ENCODE measurements at regions of chr11 and their contacts with region 1.

Region 1: DNA sequence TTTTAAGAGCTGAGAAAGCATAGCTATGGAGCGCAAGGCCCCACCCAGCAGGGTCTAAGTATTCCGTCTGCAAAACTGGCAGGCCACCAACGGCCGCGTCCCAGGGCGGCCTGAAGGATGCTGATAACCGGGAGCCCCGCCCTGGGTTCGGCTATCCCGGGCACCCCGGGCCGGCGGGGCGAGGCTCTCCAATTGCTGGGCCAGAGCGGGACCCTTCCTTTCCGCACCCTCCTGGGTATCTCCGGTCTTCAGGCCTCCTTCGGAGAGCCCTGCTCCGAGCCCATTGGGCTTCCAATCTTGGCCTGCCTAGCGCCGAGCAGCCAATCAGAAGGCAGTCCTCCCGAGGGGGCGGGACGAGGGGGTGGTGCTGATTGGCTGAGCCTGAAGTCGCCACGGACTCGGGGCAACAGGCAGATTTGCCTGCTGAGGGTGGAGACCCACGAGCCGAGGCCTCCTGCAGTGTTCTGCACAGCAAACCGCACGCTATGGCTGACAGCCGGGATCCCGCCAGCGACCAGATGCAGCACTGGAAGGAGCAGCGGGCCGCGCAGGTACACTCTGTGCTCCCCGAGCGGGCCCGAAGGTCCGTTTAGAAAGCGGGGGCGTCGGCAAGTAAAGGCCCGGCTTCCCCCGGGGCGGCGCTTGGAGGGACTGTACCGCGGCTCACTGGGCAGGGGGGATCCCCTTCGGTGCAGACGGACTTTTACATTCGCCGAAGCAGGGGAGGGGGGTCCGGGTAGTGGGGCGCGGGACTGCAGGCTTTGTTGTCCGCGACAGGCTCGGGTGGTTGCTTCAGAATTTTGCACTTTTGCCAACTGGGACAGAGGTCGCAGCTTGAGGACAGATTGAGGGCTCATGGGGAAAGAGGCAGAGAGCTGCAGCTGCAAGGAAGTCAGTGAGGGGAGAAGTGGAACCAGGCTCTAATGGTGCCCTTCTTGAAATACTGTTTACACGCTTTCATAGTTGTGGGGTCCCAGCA is at the start of gene CAT:
- DNase-seq: peak; percentile 97
- H3K4me3 Mint-ChIP-seq: peak within 1 kb of the TSS; percentile 97
- H3K27ac Mint-ChIP-seq: peak within 1 kb of the TSS; percentile 96
- H3K4me1 Mint-ChIP-seq: peaks cover 9% of the 10 kb centered on the region
- H3K27me3 Mint-ChIP-seq: no peaks in the 10 kb centered on the region
- CTCF ChIP-seq: no peak
- total RNA-seq, gene CAT: 9.5 and 12.1 TPM in 2 replicates

Region 2: GRCh38 chr11:34373727-34374126 is 65.1 kb before region 1 on chr11:
- CTCF ChIA-PET with region 1: interaction called, 4 read pairs
- POLR2A ChIA-PET with region 1: interaction called, 30 read pairs
- intact Hi-C with region 1: loop called (anchors 2 kb)
- DNase-seq: no peak
- H3K4me3 Mint-ChIP-seq: no peak overlapping the region
- H3K27ac Mint-ChIP-seq: no peak overlapping the region
- H3K4me1 Mint-ChIP-seq: peaks cover 13% of the 10 kb centered on the region
- H3K27me3 Mint-ChIP-seq: no peaks in the 10 kb centered on the region
- CTCF ChIP-seq: no peak

Region 3: GRCh38 chr11:34380696-34381095 is 58.1 kb before region 1 on chr11:
- CTCF ChIA-PET with region 1: no interaction called
- POLR2A ChIA-PET with region 1: interaction called, 17 read pairs
- intact Hi-C with region 1: no loop called
- DNase-seq: peak; percentile 59
- H3K4me3 Mint-ChIP-seq: no peak overlapping the region
- H3K27ac Mint-ChIP-seq: no peak overlapping the region
- H3K4me1 Mint-ChIP-seq: peaks cover 8% of the 10 kb centered on the region
- H3K27me3 Mint-ChIP-seq: no peaks in the 10 kb centered on the region
- CTCF ChIP-seq: no peak

Region 4: GRCh38 chr11:34395916-34396550 is 42.8 kb before region 1 on chr11:
- CTCF ChIA-PET with region 1: interaction called, 3 read pairs
- POLR2A ChIA-PET with region 1: interaction called, 42 read pairs
- intact Hi-C with region 1: no loop called
- DNase-seq: peak; percentile 84
- H3K4me3 Mint-ChIP-seq: no peak overlapping the region
- H3K27ac Mint-ChIP-seq: no peak overlapping the region
- H3K4me1 Mint-ChIP-seq: peaks cover 6% of the 10 kb centered on the region
- H3K27me3 Mint-ChIP-seq: no peaks in the 10 kb centered on the region
- CTCF ChIP-seq: no peak

Region 5: DNA sequence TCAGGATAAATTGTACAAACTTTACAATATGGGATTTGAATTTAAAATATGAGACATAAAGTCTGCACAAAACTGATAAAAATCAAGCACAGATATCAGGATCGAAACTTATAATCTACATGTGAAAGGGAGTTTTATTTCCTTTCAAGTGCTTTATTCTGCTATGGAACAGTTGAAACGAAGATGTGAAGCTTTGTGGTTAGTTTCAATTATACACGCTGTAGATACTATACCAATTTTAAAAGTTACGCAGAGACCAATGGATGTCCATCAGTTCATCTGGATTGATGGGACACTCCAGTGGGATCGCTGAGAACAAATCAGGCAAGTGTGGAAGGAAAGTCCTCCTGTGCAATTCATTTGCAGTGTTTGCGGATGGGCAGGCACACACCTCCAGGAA is 34.5 kb before region 1 on chr11:
- CTCF ChIA-PET with region 1: no interaction called
- POLR2A ChIA-PET with region 1: interaction called, 10 read pairs
- intact Hi-C with region 1: no loop called
- DNase-seq: no peak
- H3K4me3 Mint-ChIP-seq: no peak overlapping the region
- H3K27ac Mint-ChIP-seq: no peak overlapping the region
- H3K4me1 Mint-ChIP-seq: peaks cover 7% of the 10 kb centered on the region
- H3K27me3 Mint-ChIP-seq: peaks cover 13% of the 10 kb centered on the region
- CTCF ChIP-seq: no peak

Region 6: GRCh38 chr11:34427186-34427805 is 11.5 kb before region 1 on chr11:
- CTCF ChIA-PET with region 1: no interaction called
- POLR2A ChIA-PET with region 1: interaction called, 45 read pairs
- intact Hi-C with region 1: no loop called
- DNase-seq: peak; percentile 86
- H3K4me3 Mint-ChIP-seq: peak overlapping the region; percentile 2
- H3K27ac Mint-ChIP-seq: no peak overlapping the region
- H3K4me1 Mint-ChIP-seq: peaks cover 6% of the 10 kb centered on the region
- H3K27me3 Mint-ChIP-seq: no peaks in the 10 kb centered on the region
- CTCF ChIP-seq: no peak

Region 7: GRCh38 chr11:34546511-34547222 is 107.8 kb after region 1 on chr11:
- CTCF ChIA-PET with region 1: no interaction called
- POLR2A ChIA-PET with region 1: no interaction called
- intact Hi-C with region 1: no loop called
- DNase-seq: no peak
- H3K4me3 Mint-ChIP-seq: no peak overlapping the region
- H3K27ac Mint-ChIP-seq: no peak overlapping the region
- H3K4me1 Mint-ChIP-seq: no peaks in the 10 kb centered on the region
- H3K27me3 Mint-ChIP-seq: peaks cover 40% of the 10 kb centered on the region
- CTCF ChIP-seq: no peak

Region 8: GRCh38 chr11:34585735-34586487 is 147.1 kb after region 1 on chr11:
- CTCF ChIA-PET with region 1: no interaction called
- POLR2A ChIA-PET with region 1: no interaction called
- intact Hi-C with region 1: no loop called
- DNase-seq: peak; percentile 69
- H3K4me3 Mint-ChIP-seq: no peak overlapping the region
- H3K27ac Mint-ChIP-seq: peak overlapping the region; percentile 83
- H3K4me1 Mint-ChIP-seq: peaks cover 23% of the 10 kb centered on the region
- H3K27me3 Mint-ChIP-seq: no peaks in the 10 kb centered on the region
- CTCF ChIP-seq: peak; percentile 66

Measured in MCF 10A (cell line).